K562 (cell line): ENCODE measurements at regions of chr17 and their contacts with region 1.

Region 1: DNA sequence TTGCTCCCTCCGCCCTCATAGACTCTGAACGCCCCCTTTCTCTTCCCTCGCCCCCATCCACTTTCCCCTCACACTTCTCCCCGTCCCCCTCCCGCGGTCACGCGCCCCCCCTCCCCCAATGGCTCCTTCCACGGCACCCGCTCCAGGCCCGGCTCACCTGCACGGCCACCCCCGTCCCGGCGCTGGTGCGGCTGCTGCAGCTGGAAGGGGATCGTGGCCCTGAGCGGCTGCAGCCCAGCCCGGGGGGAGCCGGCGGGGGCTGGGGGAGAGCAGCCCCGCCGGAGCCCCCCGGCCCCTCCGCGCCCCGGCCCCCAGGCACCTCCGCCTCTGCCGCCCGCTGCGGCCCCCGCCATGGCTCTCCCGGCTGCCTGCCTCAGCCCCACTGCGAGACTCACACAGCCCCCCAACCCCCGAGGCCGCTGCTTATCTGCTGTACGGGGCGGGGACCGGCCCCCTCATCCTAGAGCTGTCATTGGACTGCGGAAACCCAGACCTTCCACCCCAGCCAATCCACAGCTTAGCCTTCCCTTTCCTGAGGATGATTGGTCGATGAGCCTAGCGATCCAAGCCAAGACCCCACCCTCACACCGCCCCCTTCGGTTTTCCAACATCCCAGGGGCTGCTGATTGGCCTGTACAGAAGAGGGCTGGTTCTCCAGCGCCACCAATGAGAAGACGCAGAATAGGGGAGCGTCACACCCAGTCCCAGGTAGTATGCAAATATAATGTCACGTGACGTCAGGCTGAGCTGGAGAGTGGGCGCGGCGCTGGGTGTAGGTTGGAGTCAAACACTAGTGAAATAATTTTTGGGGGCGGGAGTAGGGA is at the start of gene FAM117A:
- DNase-seq: peak; percentile 99 to 100 (median 99)
- ATAC-seq: peak; percentile 95
- H3K4me3 ChIP-seq: peak within 1 kb of the TSS; percentile 69
- H3K27ac ChIP-seq: peak within 1 kb of the TSS; percentile 71
- H3K4me1 ChIP-seq: peaks cover 8 to 48% of the 10 kb centered on the region in 2 experiments
- H3K27me3 ChIP-seq: no peaks in the 10 kb centered on the region
- CTCF ChIP-seq: no peak
- EP300 ChIP-seq: no peak
- POLR2A ChIP-seq: peak; percentile 80
- RAD21 ChIP-seq: no peak
- polyA plus RNA-seq, gene FAM117A: 3.1 to 4.7 TPM

Region 2: DNA sequence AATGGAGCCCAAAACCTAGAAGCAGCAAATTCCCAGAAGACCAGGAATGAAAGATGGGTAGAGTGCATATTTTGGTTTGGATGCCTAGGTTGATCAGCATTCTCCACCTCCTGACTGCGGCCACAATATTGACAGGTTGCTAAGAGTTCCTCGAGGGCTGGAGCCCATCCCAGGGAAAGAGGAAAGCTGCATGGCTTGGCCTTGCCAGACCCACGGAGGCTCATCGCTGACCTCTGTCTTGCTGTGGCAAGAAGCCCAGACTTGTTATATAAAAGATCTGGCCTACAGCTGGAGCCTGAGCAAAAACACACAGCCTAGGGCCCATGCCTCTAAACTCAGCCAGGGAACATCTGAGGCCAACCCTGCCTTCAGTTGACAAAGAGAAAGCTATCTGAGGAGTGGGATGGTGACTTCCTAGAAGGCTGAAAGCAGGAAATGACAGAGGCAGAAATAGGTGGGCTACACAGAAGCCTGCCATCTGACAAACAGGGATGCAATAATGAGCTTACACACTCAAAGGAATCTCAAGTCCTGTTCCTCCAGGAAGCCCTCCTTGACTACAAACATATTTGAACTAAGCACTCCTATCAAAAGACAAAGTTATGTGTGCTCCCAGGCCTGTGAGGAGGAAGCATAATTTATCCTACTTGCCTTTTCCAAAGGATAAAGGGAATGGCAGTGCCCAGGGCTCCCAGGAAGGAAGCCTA is 33.7 kb before region 1 on chr17:
- CTCF ChIA-PET with region 1: no interaction called
- POLR2A ChIA-PET with region 1: no interaction called
- in situ Hi-C with region 1: no loop called
- intact Hi-C with region 1: no loop called
- DNase-seq: no peak
- ATAC-seq: no peak
- H3K4me3 ChIP-seq: no peak overlapping the region
- H3K27ac ChIP-seq: no peak overlapping the region
- H3K4me1 ChIP-seq: peaks cover 0 to 8% of the 10 kb centered on the region in 2 experiments; a peak in 4 of 5 replicates
- H3K27me3 ChIP-seq: no peaks in the 10 kb centered on the region
- CTCF ChIP-seq: no peak
- EP300 ChIP-seq: no peak
- POLR2A ChIP-seq: no peak
- RAD21 ChIP-seq: no peak

Region 3: GRCh38 chr17:49748791-49749190 is 15.2 kb before region 1 on chr17:
- CTCF ChIA-PET with region 1: no interaction called
- POLR2A ChIA-PET with region 1: interaction called, 18 read pairs
- in situ Hi-C with region 1: no loop called
- intact Hi-C with region 1: no loop called
- DNase-seq: no peak
- ATAC-seq: peak; percentile 12; the same call in 2 of the 3 replicates
- H3K4me3 ChIP-seq: no peak overlapping the region
- H3K27ac ChIP-seq: no peak overlapping the region
- H3K4me1 ChIP-seq: peaks cover 6 to 46% of the 10 kb centered on the region in 2 experiments
- H3K27me3 ChIP-seq: no peaks in the 10 kb centered on the region
- CTCF ChIP-seq: no peak
- EP300 ChIP-seq: no peak
- POLR2A ChIP-seq: no peak
- RAD21 ChIP-seq: no peak

Region 4: GRCh38 chr17:49779739-49780231 is 15.8 kb after region 1 on chr17:
- CTCF ChIA-PET with region 1: no interaction called
- POLR2A ChIA-PET with region 1: interaction called, 19 read pairs
- in situ Hi-C with region 1: no loop called
- intact Hi-C with region 1: no loop called
- DNase-seq: peak; percentile 35 to 78 (median 44)
- ATAC-seq: peak; percentile 95
- H3K4me3 ChIP-seq: no peak overlapping the region
- H3K27ac ChIP-seq: peak overlapping the region; percentile 35; the same call in 2 of the 3 replicates
- H3K4me1 ChIP-seq: peaks cover 5 to 16% of the 10 kb centered on the region in 2 experiments; a peak in 4 of 5 replicates
- H3K27me3 ChIP-seq: no peaks in the 10 kb centered on the region
- CTCF ChIP-seq: peak; percentile 61 to 81 (median 79)
- EP300 ChIP-seq: no peak
- POLR2A ChIP-seq: no peak
- RAD21 ChIP-seq: peak; percentile 80 to 87

Region 5: GRCh38 chr17:49788478-49789242 is 24.7 kb after region 1 on chr17 and contains the start of gene KAT7:
- CTCF ChIA-PET with region 1: no interaction called
- POLR2A ChIA-PET with region 1: interaction called, 13 read pairs
- in situ Hi-C with region 1: no loop called
- intact Hi-C with region 1: no loop called
- DNase-seq: peak; percentile 98 to 99 (median 98)
- ATAC-seq: peak; percentile 97
- H3K4me3 ChIP-seq: peak within 1 kb of the TSS; percentile 95
- H3K27ac ChIP-seq: peak within 1 kb of the TSS; percentile 100
- H3K4me1 ChIP-seq: peaks cover 10 to 17% of the 10 kb centered on the region in 2 experiments
- H3K27me3 ChIP-seq: no peaks in the 10 kb centered on the region
- CTCF ChIP-seq: no peak
- EP300 ChIP-seq: peak; percentile 37; the same call in 1 of the 2 replicates
- POLR2A ChIP-seq: peak; percentile 99
- RAD21 ChIP-seq: 0 out of 4 replicates have a peak, but pooled peaks of 1 of the 2 experiments have one; percentile 17
- polyA plus RNA-seq, gene KAT7: 10.8 to 10.9 TPM